ENCODE measurements at regions of chr12 and their contacts with region 1.

Region 1: DNA sequence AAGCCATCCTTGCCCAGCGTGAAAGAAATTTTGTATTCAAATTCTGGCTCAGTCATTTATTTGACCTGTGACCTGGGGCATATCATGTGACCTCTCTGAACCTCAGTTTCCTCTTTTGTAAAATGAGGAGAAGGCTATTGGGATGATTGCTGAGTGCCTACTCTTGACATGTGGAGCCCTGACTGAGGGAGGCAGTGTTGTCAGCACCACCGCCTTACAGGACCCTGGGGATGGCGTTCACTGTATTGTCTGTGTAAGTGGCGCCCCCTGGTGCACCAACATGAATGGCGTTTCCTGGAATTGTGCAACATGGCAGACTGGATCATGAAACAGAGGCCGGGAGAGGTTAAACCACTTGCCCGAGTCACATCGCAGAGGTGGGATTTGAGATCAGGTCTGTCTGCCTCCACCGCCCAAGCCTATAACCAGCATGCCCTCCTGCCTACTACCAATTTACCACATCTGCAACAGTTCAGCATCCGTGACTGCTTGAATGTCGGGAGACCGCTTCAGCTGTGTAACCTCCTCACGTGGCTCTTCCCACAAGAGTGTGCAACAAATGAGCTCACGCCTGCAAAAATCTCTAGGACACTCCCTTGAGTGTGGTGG is 20.1 kb upstream of the CCDC63 start:
- DNase-seq: peak; percentile 79
- H3K4me3 Mint-ChIP-seq: peak overlapping the region; percentile 40
- H3K27ac Mint-ChIP-seq: peak overlapping the region; percentile 78
- H3K4me1 Mint-ChIP-seq: peaks cover 12% of the 10 kb centered on the region
- H3K27me3 Mint-ChIP-seq: peaks cover 8% of the 10 kb centered on the region

Region 2: DNA sequence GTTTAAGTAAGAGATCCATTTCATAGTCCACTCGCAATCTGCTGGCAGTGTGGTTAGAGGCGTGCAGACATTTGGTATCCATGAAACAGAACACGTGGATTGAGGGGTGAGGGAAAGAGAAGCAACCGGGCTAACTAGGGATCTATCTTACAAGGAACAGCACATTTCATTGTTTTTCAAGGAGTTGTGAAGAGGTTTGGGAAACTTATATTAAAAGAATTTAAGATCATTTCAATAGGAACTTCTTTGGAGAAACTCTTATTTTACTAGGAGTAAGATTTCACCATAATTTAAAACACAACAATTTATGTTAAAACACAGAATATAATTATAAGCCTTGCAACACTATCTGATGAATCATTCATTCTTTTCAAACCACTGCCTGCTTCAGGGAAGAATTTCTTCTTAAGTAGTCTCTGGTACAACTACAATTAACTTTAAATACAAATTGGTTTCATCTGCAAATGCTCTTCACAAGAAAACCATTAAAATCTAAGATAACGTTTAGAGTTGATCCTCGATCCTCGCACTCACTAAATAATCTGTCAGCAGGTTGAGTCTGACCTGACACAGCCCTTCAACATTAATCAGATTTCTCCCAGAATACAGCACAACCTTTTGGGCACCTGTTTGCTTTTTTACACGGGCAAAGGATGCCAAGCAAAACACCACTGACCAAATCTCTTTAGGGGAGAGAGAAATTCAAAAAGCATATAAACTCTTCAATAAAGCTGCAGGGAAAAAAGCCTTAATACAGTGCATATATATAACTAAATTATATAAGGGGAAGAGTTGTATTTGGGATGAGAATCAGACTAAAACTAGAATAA is 270.9 kb before region 1 on chr12:
- intact Hi-C with region 1: loop called (anchors 1 kb)
- DNase-seq: no peak
- H3K4me3 Mint-ChIP-seq: no peak overlapping the region
- H3K27ac Mint-ChIP-seq: peak overlapping the region; percentile 57
- H3K4me1 Mint-ChIP-seq: peaks cover 58% of the 10 kb centered on the region
- H3K27me3 Mint-ChIP-seq: no peaks in the 10 kb centered on the region

Region 3: GRCh38 chr12:110619534-110619953 is 207.2 kb before region 1 on chr12:
- intact Hi-C with region 1: loop called (anchors 1 kb)
- DNase-seq: no peak
- H3K4me3 Mint-ChIP-seq: peak overlapping the region; percentile 37
- H3K27ac Mint-ChIP-seq: peak overlapping the region; percentile 77
- H3K4me1 Mint-ChIP-seq: peaks cover 10% of the 10 kb centered on the region
- H3K27me3 Mint-ChIP-seq: peaks cover 4% of the 10 kb centered on the region

Region 4: GRCh38 chr12:110726708-110727369 is 99.9 kb before region 1 on chr12:
- intact Hi-C with region 1: loop called (anchors 1 kb)
- DNase-seq: no peak
- H3K4me3 Mint-ChIP-seq: no peak overlapping the region
- H3K27ac Mint-ChIP-seq: peak overlapping the region; percentile 25
- H3K4me1 Mint-ChIP-seq: peaks cover 62% of the 10 kb centered on the region
- H3K27me3 Mint-ChIP-seq: no peaks in the 10 kb centered on the region

Region 5: DNA sequence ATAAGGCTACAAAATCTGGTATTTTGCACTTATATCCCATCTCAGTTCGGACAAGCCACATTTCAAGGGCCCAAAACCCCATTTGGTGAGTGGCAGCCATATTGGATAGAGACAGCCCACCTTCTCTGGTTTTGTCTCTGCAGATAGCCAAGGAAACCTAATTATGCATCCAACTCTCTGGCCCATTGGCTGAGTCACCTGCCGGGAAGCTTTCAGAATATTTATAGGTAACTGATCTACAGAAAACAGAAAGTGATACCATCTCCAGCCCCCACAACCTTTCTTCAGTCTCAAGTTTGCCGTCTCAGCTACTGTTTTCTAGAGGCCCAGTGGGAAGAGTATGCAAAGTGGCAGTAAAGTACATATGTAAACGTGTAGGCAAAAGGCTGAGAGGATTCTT is 50.3 kb before region 1 on chr12:
- intact Hi-C with region 1: loop called (anchors 1 kb)
- DNase-seq: peak; percentile 43
- H3K4me3 Mint-ChIP-seq: peak overlapping the region; percentile 40
- H3K27ac Mint-ChIP-seq: peak overlapping the region; percentile 99
- H3K4me1 Mint-ChIP-seq: peaks cover 72% of the 10 kb centered on the region
- H3K27me3 Mint-ChIP-seq: no peaks in the 10 kb centered on the region

Region 6: GRCh38 chr12:110813285-110813684 is 13.4 kb before region 1 on chr12:
- intact Hi-C with region 1: no loop called
- DNase-seq: no peak
- H3K4me3 Mint-ChIP-seq: no peak overlapping the region
- H3K27ac Mint-ChIP-seq: no peak overlapping the region
- H3K4me1 Mint-ChIP-seq: peaks cover 8% of the 10 kb centered on the region
- H3K27me3 Mint-ChIP-seq: peaks cover 9% of the 10 kb centered on the region

Measured in activated T-helper 1 cell treated with anti-CD3 and anti-CD28 coated beads, Interleukin-12 subunit alpha, Interleukin-12 subunit beta, Interleukin-2, Interleukin-4 antibody, amounts not matched to agents 30 ng/mL and 10 ng/mL and 1 ng/mL, durations not matched to agents 14 hours and 24 hours and 36 hours (primary cell).